ENCODE measurements at regions of chr6 and their contacts with region 1.

Region 1: GRCh38 chr6:142819603-142820337 is 125.2 kb downstream of the HIVEP2 start:
- DNase-seq: peak; percentile 70
- ATAC-seq: peak; percentile 62
- H3K4me3 Mint-ChIP-seq: peak overlapping the region; percentile 78
- H3K27ac Mint-ChIP-seq: peak overlapping the region; percentile 96
- H3K4me1 Mint-ChIP-seq: peaks cover 83% of the 10 kb centered on the region
- H3K27me3 Mint-ChIP-seq: no peaks in the 10 kb centered on the region

Region 2: DNA sequence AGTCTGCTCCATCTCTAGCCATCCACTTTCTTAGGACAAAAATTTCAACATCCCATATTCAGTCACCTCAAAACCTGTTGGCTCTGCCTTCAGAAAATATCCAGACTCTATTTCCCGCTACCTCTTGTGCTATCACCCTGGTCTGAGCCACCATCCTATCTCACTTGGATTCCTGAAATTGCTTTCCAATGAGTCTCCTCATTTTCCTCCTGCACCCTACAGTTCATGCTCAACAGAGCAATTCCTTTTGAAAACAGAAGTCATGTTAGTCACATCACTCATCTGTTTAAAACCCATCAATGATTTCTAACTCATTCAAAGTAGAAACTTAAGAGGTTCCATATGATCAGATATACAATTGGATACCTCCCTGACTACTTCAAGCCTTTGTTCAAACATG is 288.0 kb before region 1 on chr6:
- CTCF ChIA-PET with region 1: no interaction called
- POLR2A ChIA-PET with region 1: no interaction called
- intact Hi-C with region 1: no loop called
- DNase-seq: no peak
- ATAC-seq: no peak
- H3K4me3 Mint-ChIP-seq: no peak overlapping the region
- H3K27ac Mint-ChIP-seq: no peak overlapping the region
- H3K4me1 Mint-ChIP-seq: no peaks in the 10 kb centered on the region
- H3K27me3 Mint-ChIP-seq: peaks cover 2% of the 10 kb centered on the region

Region 3: DNA sequence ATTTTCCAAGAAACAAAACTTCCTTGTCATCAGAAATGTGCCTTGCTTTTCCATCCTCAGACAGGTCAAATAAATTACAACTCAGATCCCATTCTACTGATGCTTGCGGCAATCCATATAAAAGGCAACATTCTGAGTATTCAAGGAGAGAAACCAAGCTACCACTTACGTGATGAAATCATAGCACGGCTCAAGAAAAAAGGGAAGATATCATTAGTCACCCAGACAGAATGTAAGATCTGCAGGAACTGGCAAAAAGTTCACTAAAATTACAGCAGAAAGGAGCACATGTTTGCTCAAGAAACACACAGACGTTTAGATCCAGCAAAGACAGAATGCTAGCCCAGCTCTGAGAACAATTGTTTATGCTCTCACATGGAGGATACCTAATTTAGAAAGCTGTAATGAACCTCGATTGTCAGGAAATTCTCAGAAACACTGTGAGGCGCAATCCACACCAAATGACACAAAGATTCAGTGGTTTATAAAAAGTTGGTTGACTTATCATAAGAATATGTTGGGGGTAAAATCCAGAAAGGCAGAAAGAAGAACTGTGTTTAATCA is 213.8 kb before region 1 on chr6:
- CTCF ChIA-PET with region 1: no interaction called
- POLR2A ChIA-PET with region 1: no interaction called
- intact Hi-C with region 1: no loop called
- DNase-seq: no peak
- ATAC-seq: no peak
- H3K4me3 Mint-ChIP-seq: no peak overlapping the region
- H3K27ac Mint-ChIP-seq: no peak overlapping the region
- H3K4me1 Mint-ChIP-seq: peaks cover 11% of the 10 kb centered on the region
- H3K27me3 Mint-ChIP-seq: peaks cover 7% of the 10 kb centered on the region

Region 4: GRCh38 chr6:142773859-142774648 is 45.7 kb before region 1 on chr6:
- CTCF ChIA-PET with region 1: interaction called, 4 read pairs
- POLR2A ChIA-PET with region 1: no interaction called
- intact Hi-C with region 1: loop called (anchors 2 to 5 kb)
- DNase-seq: peak; percentile 45
- ATAC-seq: peak; percentile 72
- H3K4me3 Mint-ChIP-seq: peak overlapping the region; percentile 30
- H3K27ac Mint-ChIP-seq: peak overlapping the region; percentile 89
- H3K4me1 Mint-ChIP-seq: peaks cover 54% of the 10 kb centered on the region
- H3K27me3 Mint-ChIP-seq: no peaks in the 10 kb centered on the region

Region 5: DNA sequence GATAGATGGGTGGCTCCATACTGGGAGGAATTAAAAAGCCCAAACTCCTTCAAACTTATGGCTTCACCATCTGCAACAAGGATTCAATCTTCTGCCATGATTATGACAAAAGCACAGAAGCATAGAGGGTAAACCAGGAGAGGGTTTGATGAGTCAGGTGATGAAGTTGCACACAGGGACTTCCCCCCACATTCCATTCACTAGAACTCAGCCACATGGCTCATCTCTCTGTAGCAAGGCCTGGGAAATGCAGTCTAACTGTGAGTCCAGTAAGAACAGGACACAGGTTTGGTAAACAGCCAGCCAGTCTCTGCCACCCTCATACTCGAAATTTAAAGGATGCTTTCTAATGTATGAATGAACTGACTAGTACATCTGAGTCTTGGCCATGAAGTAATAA is 17.6 kb before region 1 on chr6:
- CTCF ChIA-PET with region 1: interaction called, 8 read pairs
- POLR2A ChIA-PET with region 1: interaction called, 5 read pairs
- intact Hi-C with region 1: loop called (anchors 1 kb)
- DNase-seq: peak; percentile 73
- ATAC-seq: peak; percentile 92
- H3K4me3 Mint-ChIP-seq: no peak overlapping the region
- H3K27ac Mint-ChIP-seq: peak overlapping the region; percentile 91
- H3K4me1 Mint-ChIP-seq: peaks cover 94% of the 10 kb centered on the region
- H3K27me3 Mint-ChIP-seq: no peaks in the 10 kb centered on the region

Region 6: GRCh38 chr6:142842418-142843261 is 22.9 kb after region 1 on chr6:
- CTCF ChIA-PET with region 1: interaction called, 37 read pairs
- POLR2A ChIA-PET with region 1: interaction called, 5 read pairs
- intact Hi-C with region 1: loop called (anchors 1 kb)
- DNase-seq: peak; percentile 66
- ATAC-seq: peak; percentile 80
- H3K4me3 Mint-ChIP-seq: peak overlapping the region; percentile 71
- H3K27ac Mint-ChIP-seq: peak overlapping the region; percentile 97
- H3K4me1 Mint-ChIP-seq: peaks cover 89% of the 10 kb centered on the region
- H3K27me3 Mint-ChIP-seq: no peaks in the 10 kb centered on the region

Region 7: GRCh38 chr6:142885182-142885867 is 65.6 kb after region 1 on chr6:
- CTCF ChIA-PET with region 1: interaction called, 6 read pairs
- POLR2A ChIA-PET with region 1: no interaction called
- intact Hi-C with region 1: loop called in 1 of 2 experiments (anchors 1 kb)
- DNase-seq: peak; percentile 55
- ATAC-seq: peak; percentile 82
- H3K4me3 Mint-ChIP-seq: peak overlapping the region; percentile 76
- H3K27ac Mint-ChIP-seq: peak overlapping the region; percentile 99
- H3K4me1 Mint-ChIP-seq: peaks cover 88% of the 10 kb centered on the region
- H3K27me3 Mint-ChIP-seq: no peaks in the 10 kb centered on the region

Region 8: GRCh38 chr6:143136647-143137046 is 316.9 kb after region 1 on chr6:
- CTCF ChIA-PET with region 1: no interaction called
- POLR2A ChIA-PET with region 1: no interaction called
- intact Hi-C with region 1: loop called in 1 of 2 experiments (anchors 10 kb)
- DNase-seq: no peak
- ATAC-seq: no peak
- H3K4me3 Mint-ChIP-seq: no peak overlapping the region
- H3K27ac Mint-ChIP-seq: peak overlapping the region; percentile 78
- H3K4me1 Mint-ChIP-seq: peaks cover 52% of the 10 kb centered on the region
- H3K27me3 Mint-ChIP-seq: no peaks in the 10 kb centered on the region

Region 9: GRCh38 chr6:143323729-143324470 is 504.1 kb after region 1 on chr6:
- CTCF ChIA-PET with region 1: no interaction called
- POLR2A ChIA-PET with region 1: no interaction called
- intact Hi-C with region 1: no loop called
- DNase-seq: no peak
- ATAC-seq: no peak
- H3K4me3 Mint-ChIP-seq: no peak overlapping the region
- H3K27ac Mint-ChIP-seq: no peak overlapping the region
- H3K4me1 Mint-ChIP-seq: no peaks in the 10 kb centered on the region
- H3K27me3 Mint-ChIP-seq: no peaks in the 10 kb centered on the region